Right ventricle myocardium inferior (tissue), 1 donor: ENCODE measurements at regions of chr1 and their contacts with region 1.

Region 1: GRCh38 chr1:174883409-174883808 is 116.3 kb upstream of the CACYBP start:
- DNase-seq: no peak
- ATAC-seq: peak; percentile 44

Region 2: DNA sequence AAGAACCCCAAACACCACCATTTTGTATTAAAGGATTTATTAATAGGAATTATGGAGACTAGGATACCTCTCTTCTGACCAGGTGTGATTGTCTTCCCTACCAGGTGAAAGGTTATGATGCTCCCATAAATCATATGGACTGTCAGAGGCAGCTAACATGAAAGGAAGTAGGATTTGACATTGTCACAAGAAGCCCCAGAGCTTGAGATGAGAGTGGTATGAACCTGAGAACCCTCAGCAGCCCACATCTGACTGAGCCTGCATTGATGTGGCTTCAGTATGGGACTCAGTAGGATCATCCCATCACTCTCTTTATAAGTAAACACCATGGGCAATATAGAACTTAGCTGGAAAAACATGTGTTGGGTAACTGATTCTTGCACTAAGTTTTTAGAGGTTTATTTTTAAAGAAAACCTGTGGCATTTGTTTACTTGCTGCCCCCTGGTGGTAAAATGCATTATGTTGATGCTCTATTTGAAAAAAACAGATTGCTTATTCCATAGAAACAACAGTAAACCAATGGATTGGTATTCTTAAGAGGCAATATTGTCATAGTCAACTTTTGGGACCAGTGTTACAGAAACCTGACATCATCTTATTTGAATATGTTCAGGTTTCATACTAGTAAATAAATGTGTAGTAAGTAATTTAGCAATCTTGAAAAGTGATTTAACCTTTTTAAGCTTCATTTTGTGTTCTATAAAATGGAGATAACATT is 99.7 kb after region 1 on chr1:
- intact Hi-C with region 1: loop called (anchors 10 kb)
- DNase-seq: no peak
- ATAC-seq: no peak

Region 3: DNA sequence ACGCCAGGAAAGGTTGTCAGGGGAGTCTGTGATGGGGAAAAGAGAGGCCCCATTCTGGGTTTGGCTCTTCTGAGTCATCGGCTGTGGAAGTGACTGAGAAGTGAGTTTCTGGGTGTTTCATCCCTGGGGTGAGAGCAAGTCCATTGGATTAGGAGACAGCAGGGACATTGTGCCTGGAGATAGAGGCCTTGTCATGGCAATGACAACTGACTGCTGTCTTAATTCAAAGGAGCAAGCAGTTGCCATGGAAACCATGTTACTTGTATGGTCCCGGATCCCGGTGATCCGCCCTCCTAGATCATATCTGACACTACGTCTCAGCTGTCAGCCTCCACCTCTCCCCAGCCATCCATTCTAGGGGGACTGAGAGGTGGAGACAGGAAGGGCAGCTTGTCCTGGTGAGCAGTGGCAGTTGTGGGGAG is 274.8 kb after region 1 on chr1:
- intact Hi-C with region 1: no loop called
- DNase-seq: no peak
- ATAC-seq: no peak